H1 (cell line): ENCODE measurements at regions of chr15 and their contacts with region 1.

Region 1: DNA sequence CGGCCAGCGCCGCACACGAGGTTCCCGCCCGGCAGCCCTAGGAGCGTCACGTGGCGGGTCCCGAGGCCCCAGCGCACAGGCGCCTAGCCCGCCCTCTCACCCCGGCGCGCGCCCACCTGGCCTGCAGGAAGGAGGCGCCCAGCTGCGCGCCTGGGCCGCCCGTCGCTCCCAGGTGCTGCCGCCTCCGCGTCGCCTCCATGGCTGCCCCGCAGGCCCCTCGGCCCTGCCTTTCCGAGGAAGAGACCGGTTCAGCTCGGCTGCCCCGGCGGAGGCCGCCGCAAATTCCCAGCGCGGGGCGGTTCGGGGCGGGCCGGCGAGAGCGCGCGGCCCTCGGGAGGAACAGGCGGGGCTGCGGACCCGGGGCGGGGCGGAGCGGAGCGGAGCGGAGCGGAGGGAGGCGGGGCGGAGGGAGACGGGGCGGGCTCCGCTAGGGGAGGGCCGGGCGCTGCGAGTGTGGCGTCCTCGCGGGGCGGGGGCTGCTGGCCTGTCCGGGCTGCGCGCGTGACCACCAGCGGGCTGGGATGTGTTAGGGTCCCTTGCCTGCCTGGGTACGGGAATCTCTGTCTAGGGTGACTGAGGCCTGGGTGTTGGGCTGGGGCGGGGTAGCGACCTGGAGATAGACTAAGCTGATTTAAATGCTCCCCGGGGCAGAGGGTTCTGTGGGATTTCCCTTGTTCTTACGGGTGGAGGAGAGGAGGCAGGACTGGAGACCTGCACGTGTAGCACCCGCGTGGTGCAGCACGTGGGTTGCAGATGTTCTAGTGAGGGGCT is at the start of gene CLN6:
- DNase-seq: peak in 1 of 2 experiments; percentile 88
- H3K4me3 ChIP-seq: peak within 1 kb of the TSS; percentile 51 to 92 (median 78)
- H3K27ac ChIP-seq: peak within 1 kb of the TSS; percentile 90
- H3K4me1 ChIP-seq: peaks cover 7 to 17% (median 11%) of the 10 kb centered on the region in 4 experiments
- H3K27me3 ChIP-seq: peaks cover 0 to 2% (median 0%) of the 10 kb centered on the region in 4 experiments; a peak in 1 of 7 replicates
- CTCF ChIP-seq: no peak
- EP300 ChIP-seq: no peak; a peak in 1 of 3 replicates
- POLR2A ChIP-seq: peak; percentile 40 to 53; a peak in 2 of 3 replicates
- RAD21 ChIP-seq: no peak
- total RNA-seq, gene CLN6: 60.0 and 62.3 TPM in 2 replicates

Region 2: DNA sequence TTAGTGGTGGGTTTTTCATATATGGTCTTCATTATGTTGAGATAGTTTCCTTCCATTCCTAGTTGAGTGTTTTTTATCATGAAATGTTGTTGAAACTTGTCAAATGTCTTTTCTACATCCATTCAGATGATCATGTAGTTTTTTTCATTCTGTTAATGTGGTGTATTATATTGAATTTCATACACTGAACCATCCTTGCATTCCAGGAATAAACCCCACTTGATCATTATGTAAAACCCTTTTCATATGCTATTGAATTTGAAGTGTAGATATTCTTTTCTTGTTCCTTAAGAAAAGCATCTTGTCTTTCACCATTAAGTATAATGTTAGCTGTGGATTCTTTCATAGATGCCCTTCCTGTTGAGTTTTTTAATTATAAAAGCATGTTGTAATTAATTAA is 132.5 kb before region 1 on chr15:
- CTCF ChIA-PET with region 1: no interaction called
- POLR2A ChIA-PET with region 1: no interaction called
- DNase-seq: no peak
- H3K4me3 ChIP-seq: no peak overlapping the region
- H3K27ac ChIP-seq: no peak overlapping the region
- H3K4me1 ChIP-seq: no peaks in the 10 kb centered on the region
- H3K27me3 ChIP-seq: no peaks in the 10 kb centered on the region
- CTCF ChIP-seq: no peak
- EP300 ChIP-seq: no peak
- POLR2A ChIP-seq: no peak
- RAD21 ChIP-seq: no peak

Region 3: DNA sequence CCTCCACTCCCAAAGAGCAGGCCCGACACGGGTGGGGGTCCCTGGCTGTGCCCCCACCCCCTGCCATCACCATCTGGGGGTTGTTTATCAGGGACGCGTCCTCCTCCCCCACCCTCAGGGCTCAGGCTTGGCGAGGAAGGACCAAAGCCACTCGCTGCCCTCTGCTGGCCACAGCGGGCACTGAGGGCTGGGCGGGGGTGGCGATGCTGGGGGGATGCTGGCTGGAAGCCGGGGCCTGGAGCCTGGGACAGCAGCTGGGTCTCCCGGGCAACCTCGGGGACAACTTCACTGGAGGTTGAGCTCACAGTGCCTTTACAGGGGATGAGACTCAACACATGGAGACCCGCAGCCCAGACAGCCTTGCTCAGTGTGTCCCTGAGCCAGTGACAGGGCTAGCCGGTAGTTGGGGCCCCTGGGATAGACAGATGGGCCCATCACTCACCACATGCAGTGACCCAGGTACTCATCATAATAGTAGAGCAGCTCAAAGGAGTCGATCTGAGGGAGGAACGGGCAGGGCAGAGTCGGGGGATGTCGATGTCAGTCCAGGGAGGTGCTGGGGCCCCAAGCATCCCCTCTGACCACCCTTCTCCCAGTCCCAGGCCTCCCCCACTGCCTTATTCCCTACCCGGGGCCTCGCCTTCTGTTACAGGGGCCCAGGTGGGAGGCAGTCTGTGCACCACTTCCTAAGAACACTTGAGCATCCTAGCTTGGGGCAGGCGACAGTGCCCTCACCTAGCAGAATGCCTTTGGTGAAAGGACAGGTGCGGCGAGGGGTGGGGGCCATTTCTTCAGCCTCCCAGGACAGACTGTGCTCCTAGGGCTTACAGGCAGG is 18.5 kb before region 1 on chr15:
- CTCF ChIA-PET with region 1: interaction called, 11 read pairs
- POLR2A ChIA-PET with region 1: interaction called, 38 read pairs
- DNase-seq: peak in 1 of 2 experiments; percentile 96
- H3K4me3 ChIP-seq: no peak overlapping the region
- H3K27ac ChIP-seq: peak overlapping the region; percentile 27; the same call in 1 of the 2 replicates
- H3K4me1 ChIP-seq: peaks cover 2 to 29% (median 11%) of the 10 kb centered on the region in 4 experiments
- H3K27me3 ChIP-seq: no peaks in the 10 kb centered on the region
- CTCF ChIP-seq: peak in 2 of 3 experiments; percentile 87 to 89; a peak in 3 of 4 replicates
- EP300 ChIP-seq: no peak
- POLR2A ChIP-seq: no peak
- RAD21 ChIP-seq: peak; percentile 68 to 82

Region 4: GRCh38 chr15:68218847-68219798 is 10.4 kb before region 1 on chr15:
- CTCF ChIA-PET with region 1: interaction called, 3 read pairs
- POLR2A ChIA-PET with region 1: interaction called, 38 read pairs
- DNase-seq: peak in 1 of 2 experiments; percentile 27
- H3K4me3 ChIP-seq: no peak overlapping the region
- H3K27ac ChIP-seq: no peak overlapping the region
- H3K4me1 ChIP-seq: no peaks in the 10 kb centered on the region
- H3K27me3 ChIP-seq: no peaks in the 10 kb centered on the region
- CTCF ChIP-seq: no peak
- EP300 ChIP-seq: no peak
- POLR2A ChIP-seq: no peak
- RAD21 ChIP-seq: no peak

Region 5: GRCh38 chr15:68241088-68241935 is 11.7 kb after region 1 on chr15:
- CTCF ChIA-PET with region 1: no interaction called
- POLR2A ChIA-PET with region 1: interaction called, 11 read pairs
- DNase-seq: peak in 1 of 2 experiments; percentile 32
- H3K4me3 ChIP-seq: no peak overlapping the region
- H3K27ac ChIP-seq: no peak overlapping the region
- H3K4me1 ChIP-seq: peaks cover 0 to 5% (median 0%) of the 10 kb centered on the region in 4 experiments; a peak in 1 of 7 replicates
- H3K27me3 ChIP-seq: no peaks in the 10 kb centered on the region
- CTCF ChIP-seq: no peak
- EP300 ChIP-seq: no peak
- POLR2A ChIP-seq: no peak
- RAD21 ChIP-seq: no peak

Region 6: DNA sequence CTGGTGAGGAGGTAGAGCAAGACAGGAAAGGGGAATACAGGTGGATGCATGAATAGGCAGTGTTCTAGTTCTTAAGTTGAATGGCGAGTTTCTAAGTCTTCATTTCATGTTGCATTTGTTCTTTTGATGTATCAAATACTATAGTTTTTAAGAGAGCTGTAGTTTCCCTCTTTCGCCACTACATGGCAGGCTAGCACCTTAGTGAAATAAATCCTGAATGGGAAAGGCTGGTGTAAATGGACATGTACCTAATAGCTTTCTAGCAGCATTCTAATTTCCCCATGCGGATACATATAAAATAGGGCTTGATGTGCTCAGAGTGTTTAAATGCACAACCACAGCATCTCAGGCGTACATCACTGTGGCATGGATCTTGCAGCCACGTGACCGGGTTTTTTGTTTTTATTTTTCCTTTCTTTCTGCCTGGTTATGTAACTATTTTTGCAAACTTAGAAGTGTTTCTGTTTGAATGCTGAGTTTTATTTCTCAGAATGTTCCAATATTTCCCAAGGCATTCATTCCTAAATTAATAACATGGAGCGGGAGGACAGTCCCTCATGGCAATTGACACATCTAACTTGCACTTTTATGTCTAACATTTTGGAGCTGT is 23.5 kb after region 1 on chr15:
- CTCF ChIA-PET with region 1: interaction called, 20 read pairs
- POLR2A ChIA-PET with region 1: interaction called, 8 read pairs
- DNase-seq: no peak
- H3K4me3 ChIP-seq: no peak overlapping the region
- H3K27ac ChIP-seq: no peak overlapping the region
- H3K4me1 ChIP-seq: peaks cover 0 to 8% (median 6%) of the 10 kb centered on the region in 4 experiments; a peak in 4 of 7 replicates
- H3K27me3 ChIP-seq: no peaks in the 10 kb centered on the region
- CTCF ChIP-seq: peak in 2 of 3 experiments; percentile 72 to 83; a peak in 3 of 4 replicates
- EP300 ChIP-seq: no peak
- POLR2A ChIP-seq: no peak
- RAD21 ChIP-seq: peak; percentile 91 to 93